Dendritic cell treated with granulocyte-macrophage colony-stimulating factor and Interleukin-4, amounts not matched to agents 40 ng/mL and 50 ng/mL, for 4 days (primary cell): ENCODE measurements at regions of chr15 and their contacts with region 1.

Region 1: DNA sequence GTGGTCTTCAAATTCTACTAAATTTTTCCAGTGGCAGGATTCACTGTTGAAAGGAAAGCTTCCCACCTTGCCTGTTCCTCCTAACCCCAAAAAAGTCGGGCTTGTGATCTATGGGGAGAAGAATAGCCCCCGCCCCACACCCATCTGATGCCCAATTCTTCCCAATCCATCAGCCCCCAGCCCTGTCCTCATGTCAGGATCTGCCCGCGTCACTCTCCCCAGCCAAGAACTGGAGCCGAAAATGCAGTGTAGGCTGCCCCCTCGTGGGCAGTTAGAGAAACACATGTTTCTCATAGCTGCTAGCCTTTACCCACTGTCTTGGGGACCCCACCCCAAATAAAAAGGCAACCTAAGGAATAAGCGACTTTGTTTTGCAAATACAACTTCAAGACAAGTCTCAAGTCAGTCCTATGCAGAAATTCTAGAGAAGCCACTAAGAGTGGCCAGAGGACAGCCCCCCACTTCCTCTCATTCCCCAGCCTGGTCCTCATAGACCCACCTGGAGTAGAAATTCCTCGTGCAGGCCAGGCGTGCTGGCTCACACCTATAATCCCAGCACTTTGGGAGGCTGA is 13.0 kb upstream of the CSK start:
- H3K4me3 Mint-ChIP-seq: no peak overlapping the region
- H3K27ac Mint-ChIP-seq: no peak overlapping the region
- H3K4me1 Mint-ChIP-seq: peaks cover 27% of the 10 kb centered on the region
- H3K27me3 Mint-ChIP-seq: peaks cover 16% of the 10 kb centered on the region

Region 2: GRCh38 chr15:74635228-74635627 is 133.6 kb before region 1 on chr15:
- intact Hi-C with region 1: loop called (anchors 1 kb)
- H3K4me3 Mint-ChIP-seq: no peak overlapping the region
- H3K27ac Mint-ChIP-seq: no peak overlapping the region
- H3K4me1 Mint-ChIP-seq: peaks cover 6% of the 10 kb centered on the region
- H3K27me3 Mint-ChIP-seq: no peaks in the 10 kb centered on the region

Region 3: GRCh38 chr15:74799856-74800547 is 31.1 kb after region 1 on chr15:
- intact Hi-C with region 1: loop called (anchors 1 kb)
- H3K4me3 Mint-ChIP-seq: no peak overlapping the region
- H3K27ac Mint-ChIP-seq: peak overlapping the region; percentile 77
- H3K4me1 Mint-ChIP-seq: peaks cover 56% of the 10 kb centered on the region
- H3K27me3 Mint-ChIP-seq: no peaks in the 10 kb centered on the region

Region 4: DNA sequence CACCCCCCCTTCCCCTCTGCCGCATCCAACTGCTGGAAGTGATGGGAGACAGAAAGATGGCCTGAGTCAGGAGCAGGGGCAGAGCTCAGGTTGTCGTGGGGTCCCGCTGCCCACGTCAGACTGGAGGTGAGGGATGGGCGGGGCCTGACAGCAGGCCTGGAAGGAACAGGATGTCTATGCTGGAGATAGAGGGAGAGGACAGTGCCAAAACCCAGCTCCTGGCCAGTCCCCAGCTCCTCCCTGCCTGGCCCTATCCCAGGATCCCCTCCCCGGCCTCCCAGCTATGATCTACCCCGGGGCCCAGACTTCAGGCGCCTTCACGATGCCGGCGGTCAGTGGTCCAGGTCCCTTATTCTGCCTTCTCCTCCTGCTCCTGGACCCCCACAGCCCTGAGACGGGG is 43.7 kb after region 1 on chr15 and contains the start of gene LMAN1L:
- intact Hi-C with region 1: no loop called
- H3K4me3 Mint-ChIP-seq: no peak within 1 kb of the TSS
- H3K27ac Mint-ChIP-seq: no peak within 1 kb of the TSS
- H3K4me1 Mint-ChIP-seq: peaks cover 11% of the 10 kb centered on the region
- H3K27me3 Mint-ChIP-seq: peaks cover 18% of the 10 kb centered on the region

Region 5: DNA sequence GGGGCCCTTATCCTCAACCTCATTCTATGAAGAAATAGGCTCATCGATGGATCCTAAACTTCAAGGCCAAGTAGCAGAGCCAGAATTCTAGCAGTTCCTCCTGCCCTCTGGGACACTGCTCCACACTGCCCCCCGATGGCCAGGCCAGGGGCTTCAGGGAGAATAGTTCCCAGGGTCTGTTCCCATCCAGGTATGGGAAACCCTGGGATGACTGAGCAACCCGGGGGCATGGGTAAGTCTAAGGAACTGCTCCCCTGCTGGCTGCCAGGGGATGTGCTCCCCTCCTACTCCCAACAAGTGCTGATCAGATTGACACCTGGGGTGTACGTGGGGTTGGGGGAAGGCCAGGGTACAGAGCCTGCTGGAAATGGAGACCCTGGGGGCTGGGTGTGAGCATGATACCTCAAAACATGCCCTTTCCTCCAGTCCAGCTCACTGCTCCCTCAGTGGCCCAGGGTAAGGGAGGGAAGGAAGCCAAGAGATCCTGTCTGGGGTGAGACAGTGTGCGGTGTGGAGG is 66.5 kb after region 1 on chr15:
- intact Hi-C with region 1: loop called (anchors 2 kb)
- H3K4me3 Mint-ChIP-seq: no peak overlapping the region
- H3K27ac Mint-ChIP-seq: no peak overlapping the region
- H3K4me1 Mint-ChIP-seq: peaks cover 22% of the 10 kb centered on the region
- H3K27me3 Mint-ChIP-seq: peaks cover 2% of the 10 kb centered on the region

Region 6: GRCh38 chr15:75008629-75009326 is 239.9 kb after region 1 on chr15:
- intact Hi-C with region 1: no loop called
- H3K4me3 Mint-ChIP-seq: peak overlapping the region; percentile 54
- H3K27ac Mint-ChIP-seq: peak overlapping the region; percentile 75
- H3K4me1 Mint-ChIP-seq: peaks cover 32% of the 10 kb centered on the region
- H3K27me3 Mint-ChIP-seq: no peaks in the 10 kb centered on the region